CD4-positive, alpha-beta T cell (primary cell): ENCODE measurements at regions of chr10 and their contacts with region 1.

Region 1: GRCh38 chr10:118720685-118721538 is 33.9 kb downstream of the CACUL1 start:
- DNase-seq: peak in 13 of 14 experiments; percentile 39 to 83 (median 59)
- ATAC-seq: peak; percentile 65
- H3K4me3 ChIP-seq: no peak overlapping the region
- H3K4me3 Mint-ChIP-seq: no peak overlapping the region
- H3K27ac ChIP-seq: no peak overlapping the region
- H3K27ac Mint-ChIP-seq: no peak overlapping the region
- H3K4me1 ChIP-seq: no peaks in the 10 kb centered on the region
- H3K4me1 Mint-ChIP-seq: peaks cover 21% of the 10 kb centered on the region
- H3K27me3 ChIP-seq: no peaks in the 10 kb centered on the region
- H3K27me3 Mint-ChIP-seq: no peaks in the 10 kb centered on the region
- CTCF ChIP-seq: peak; percentile 87

Region 2: GRCh38 chr10:118672766-118673715 is 47.9 kb before region 1 on chr10:
- CTCF ChIA-PET with region 1: no interaction called
- POLR2A ChIA-PET with region 1: no interaction called
- intact Hi-C with region 1: loop called in 1 of 2 experiments (anchors 5 kb)
- DNase-seq: no peak
- ATAC-seq: no peak
- H3K4me3 ChIP-seq: no peak overlapping the region
- H3K4me3 Mint-ChIP-seq: no peak overlapping the region
- H3K27ac ChIP-seq: no peak overlapping the region
- H3K27ac Mint-ChIP-seq: peak overlapping the region; percentile 74
- H3K4me1 ChIP-seq: peaks cover 28% of the 10 kb centered on the region
- H3K4me1 Mint-ChIP-seq: peaks cover 69% of the 10 kb centered on the region
- H3K27me3 ChIP-seq: no peaks in the 10 kb centered on the region
- H3K27me3 Mint-ChIP-seq: no peaks in the 10 kb centered on the region
- CTCF ChIP-seq: no peak

Region 3: DNA sequence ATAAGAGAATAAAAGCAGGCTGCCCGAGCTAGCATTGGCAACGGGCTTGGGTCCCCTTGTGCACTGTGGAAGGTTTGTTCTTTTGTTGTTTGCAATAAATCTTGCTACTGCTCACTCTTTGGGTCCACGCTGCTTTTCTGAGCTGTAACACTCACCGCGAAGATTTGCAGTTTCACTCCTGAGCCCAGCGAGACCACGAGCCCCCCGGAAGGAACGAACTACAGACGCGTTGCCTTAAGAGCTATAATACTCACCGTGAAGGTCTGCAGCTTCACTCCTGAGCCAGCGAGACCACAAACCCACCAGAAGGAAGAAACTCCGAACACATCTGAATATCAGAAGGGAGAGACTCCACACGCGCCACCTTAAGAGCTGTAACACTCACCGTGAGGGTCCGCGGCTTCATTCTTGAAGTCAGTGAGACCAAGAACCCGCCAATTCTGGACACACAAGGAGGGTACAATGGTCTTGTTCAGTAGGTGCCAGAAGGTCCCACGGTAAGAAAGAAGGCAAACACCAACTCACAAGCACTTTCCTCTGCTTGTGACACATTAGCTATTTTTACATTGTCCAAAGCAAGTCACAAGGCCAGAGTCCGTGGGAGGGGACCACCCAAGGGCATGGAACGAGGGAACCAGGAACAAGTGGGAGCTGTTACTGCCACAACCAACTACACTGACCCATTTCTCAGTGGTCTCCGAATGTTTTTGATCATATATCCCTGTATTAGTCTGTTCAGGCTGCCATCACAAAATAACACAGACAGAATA is 63.0 kb after region 1 on chr10:
- CTCF ChIA-PET with region 1: no interaction called
- POLR2A ChIA-PET with region 1: no interaction called
- intact Hi-C with region 1: no loop called
- DNase-seq: no peak
- ATAC-seq: no peak
- H3K4me3 ChIP-seq: no peak overlapping the region
- H3K4me3 Mint-ChIP-seq: no peak overlapping the region
- H3K27ac ChIP-seq: no peak overlapping the region
- H3K27ac Mint-ChIP-seq: no peak overlapping the region
- H3K4me1 ChIP-seq: no peaks in the 10 kb centered on the region
- H3K4me1 Mint-ChIP-seq: no peaks in the 10 kb centered on the region
- H3K27me3 ChIP-seq: peaks cover 8% of the 10 kb centered on the region in 2 experiments
- H3K27me3 Mint-ChIP-seq: peaks cover 18% of the 10 kb centered on the region
- CTCF ChIP-seq: no peak

Region 4: DNA sequence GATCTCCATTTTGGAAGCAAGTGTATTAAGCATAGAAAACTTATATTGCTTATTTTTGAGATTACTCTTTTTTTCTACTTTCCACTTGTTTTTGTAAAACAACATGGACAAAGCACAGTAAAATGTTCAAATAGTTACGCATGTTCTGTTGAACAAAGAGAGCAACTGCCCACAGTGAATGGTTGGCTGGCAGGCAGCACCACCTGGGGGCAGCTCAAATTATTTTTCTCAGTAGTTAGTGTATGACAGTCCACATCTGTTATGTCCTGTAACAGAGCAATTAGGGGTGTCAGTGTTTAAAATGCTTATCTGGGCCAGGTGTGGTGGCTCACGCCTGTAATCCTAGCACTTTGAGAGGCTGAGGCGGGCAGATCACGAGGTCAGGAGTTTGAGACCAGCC is 80.0 kb after region 1 on chr10:
- CTCF ChIA-PET with region 1: interaction called, 3 read pairs
- POLR2A ChIA-PET with region 1: no interaction called
- intact Hi-C with region 1: loop called in 1 of 2 experiments (anchors 5 kb)
- DNase-seq: peak in 7 of 14 experiments; percentile 7 to 37 (median 19)
- ATAC-seq: no peak
- H3K4me3 ChIP-seq: no peak overlapping the region
- H3K4me3 Mint-ChIP-seq: no peak overlapping the region
- H3K27ac ChIP-seq: no peak overlapping the region
- H3K27ac Mint-ChIP-seq: no peak overlapping the region
- H3K4me1 ChIP-seq: no peaks in the 10 kb centered on the region
- H3K4me1 Mint-ChIP-seq: no peaks in the 10 kb centered on the region
- H3K27me3 ChIP-seq: no peaks in the 10 kb centered on the region
- H3K27me3 Mint-ChIP-seq: peaks cover 6% of the 10 kb centered on the region
- CTCF ChIP-seq: peak; percentile 19

Region 5: DNA sequence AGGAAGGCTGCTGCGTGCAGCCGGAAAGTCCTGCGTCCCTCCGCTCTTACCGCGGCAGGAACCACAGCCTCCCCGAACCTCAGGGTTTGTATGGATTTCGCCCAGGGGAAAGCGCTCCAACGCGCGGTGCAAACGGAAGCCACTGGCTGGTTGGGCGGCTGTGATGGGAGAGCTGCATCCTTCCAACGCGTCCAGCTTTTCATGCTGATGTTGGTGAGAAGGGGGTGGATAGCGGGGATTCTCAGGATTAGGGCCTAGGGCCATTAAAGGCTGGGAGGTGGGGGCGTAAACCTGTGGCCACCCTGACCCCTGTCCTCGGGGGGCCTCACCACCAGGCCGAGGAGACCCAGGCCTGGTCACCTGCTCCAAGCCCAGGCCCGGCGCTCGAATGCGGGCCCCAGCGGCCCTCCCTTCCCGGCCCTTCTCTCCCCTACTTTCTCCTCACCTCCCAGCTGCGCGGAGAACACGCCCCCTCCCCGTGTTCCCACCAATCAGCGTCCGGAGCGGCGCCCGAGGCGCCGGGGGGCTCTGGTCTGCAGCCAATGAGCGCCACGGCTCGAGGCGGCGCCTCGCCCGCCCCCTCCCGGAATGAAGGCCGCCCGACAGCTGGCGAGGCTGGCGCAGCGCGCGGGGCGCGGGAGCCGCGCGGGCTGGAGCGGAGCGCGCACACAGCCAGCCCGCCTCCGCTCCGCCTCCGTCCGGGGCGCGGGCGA is 308.1 kb after region 1 on chr10:
- CTCF ChIA-PET with region 1: no interaction called
- POLR2A ChIA-PET with region 1: no interaction called
- intact Hi-C with region 1: no loop called
- DNase-seq: peak; percentile 56 to 91 (median 76)
- ATAC-seq: peak; percentile 83
- H3K4me3 ChIP-seq: peak overlapping the region; percentile 55
- H3K4me3 Mint-ChIP-seq: peak overlapping the region; percentile 87
- H3K27ac ChIP-seq: no peak overlapping the region
- H3K27ac Mint-ChIP-seq: no peak overlapping the region
- H3K4me1 ChIP-seq: peaks cover 13% of the 10 kb centered on the region
- H3K4me1 Mint-ChIP-seq: peaks cover 20% of the 10 kb centered on the region
- H3K27me3 ChIP-seq: no peaks in the 10 kb centered on the region
- H3K27me3 Mint-ChIP-seq: no peaks in the 10 kb centered on the region
- CTCF ChIP-seq: no peak